Right ventricle myocardium inferior (tissue), 1 donor: ENCODE measurements at regions of chr9 and their contacts with region 1.

Region 1: GRCh38 chr9:129641746-129642513 is at the start of gene ASB6:
- DNase-seq: peak; percentile 99
- ATAC-seq: peak; percentile 96
- total RNA-seq, gene ASB6: 9.3 TPM

Region 2: DNA sequence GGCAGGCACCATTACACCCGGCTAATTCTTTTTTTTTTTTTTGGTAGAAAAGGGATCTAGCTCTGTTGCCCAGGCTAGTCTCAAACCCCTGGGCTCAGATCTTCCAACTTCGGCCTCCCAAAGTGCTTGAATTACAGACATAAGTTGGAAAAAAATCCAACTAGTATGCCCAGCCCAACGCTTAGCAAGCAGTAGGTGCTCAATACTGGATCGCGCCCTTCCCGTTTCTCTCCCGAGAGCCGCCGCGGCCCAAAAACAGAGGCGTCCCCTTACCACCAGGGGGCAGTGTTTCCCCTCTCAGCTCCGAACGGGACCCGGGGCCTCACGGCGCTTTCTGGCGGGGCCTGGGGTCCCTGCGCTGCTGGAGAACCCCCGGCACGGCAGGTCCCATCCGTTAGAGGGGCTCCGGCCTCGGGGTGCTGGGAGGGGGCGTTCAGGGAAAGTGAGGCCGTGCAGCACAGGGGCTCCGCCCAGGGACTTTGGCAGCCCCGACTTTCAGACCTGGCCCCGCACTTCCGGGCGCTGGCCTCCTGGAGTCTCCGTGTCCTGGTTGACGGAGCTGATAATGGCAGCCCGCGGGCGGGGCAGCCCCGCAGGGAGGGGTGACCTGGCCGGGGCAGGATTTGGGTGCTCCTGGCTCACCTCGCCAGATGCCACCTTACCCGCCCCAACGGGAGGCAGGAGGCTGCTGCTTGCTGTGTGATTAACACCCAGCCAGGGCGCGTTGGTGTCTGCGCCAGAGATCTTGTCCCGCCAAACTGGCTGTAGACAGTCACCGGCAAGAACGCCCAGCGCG is 95.7 kb after region 1 on chr9:
- intact Hi-C with region 1: loop called (anchors 5 kb)
- DNase-seq: peak; percentile 92
- ATAC-seq: peak; percentile 88